ENCODE measurements at regions of chr6 and their contacts with region 1.

Region 1: DNA sequence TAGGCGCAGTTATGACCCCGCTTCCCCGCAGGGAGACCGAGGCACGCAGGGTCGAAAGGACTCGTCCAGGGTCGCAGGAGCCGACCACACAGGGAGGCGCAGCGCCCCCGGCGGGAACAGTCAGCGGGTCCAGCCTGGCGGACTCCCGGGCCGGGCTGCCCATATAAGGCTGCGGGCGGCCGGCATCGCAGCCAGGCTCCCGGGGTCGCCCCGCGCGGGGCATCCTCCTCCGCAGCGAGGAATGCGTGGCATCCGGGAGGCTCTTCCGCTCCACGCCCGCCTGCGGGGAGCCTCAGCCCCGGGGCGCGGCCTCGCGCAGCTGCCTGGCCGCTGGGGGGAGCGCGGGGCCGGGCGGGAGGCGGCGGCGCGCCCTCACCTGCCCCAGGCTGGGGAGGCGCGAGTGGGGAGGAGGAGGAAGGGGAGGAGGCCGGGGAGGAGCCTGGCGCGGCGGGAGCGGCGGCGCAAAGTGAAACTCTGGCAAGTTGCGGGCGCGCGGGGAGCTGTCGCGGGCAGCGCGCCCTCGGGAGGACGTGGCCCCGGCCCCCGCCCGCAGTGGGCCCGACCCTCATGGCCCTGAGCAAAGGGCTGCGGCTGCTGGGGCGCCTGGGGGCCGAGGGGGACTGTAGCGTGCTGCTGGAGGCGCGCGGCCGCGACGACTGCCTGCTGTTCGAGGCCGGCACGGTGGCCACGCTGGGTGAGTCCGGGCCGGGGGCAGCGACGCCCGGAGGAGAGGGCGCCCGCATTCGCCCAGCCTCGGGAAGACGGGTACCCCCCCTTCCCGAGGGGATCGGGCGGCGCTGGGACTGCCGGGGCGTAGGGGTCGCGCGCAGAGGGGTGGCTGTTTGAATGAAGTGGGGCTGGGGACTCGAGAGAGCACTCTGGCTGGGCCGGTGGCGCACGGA is at the start of gene SYNJ2:
- DNase-seq: peak; percentile 35 to 60 (median 44)
- H3K4me3 ChIP-seq: peak within 1 kb of the TSS; percentile 45 to 82 (median 66)
- H3K4me3 Mint-ChIP-seq: peak within 1 kb of the TSS; percentile 85 to 91
- H3K27ac ChIP-seq: no peak within 1 kb of the TSS
- H3K27ac Mint-ChIP-seq: peak within 1 kb of the TSS in 3 of 7 donors; percentile 43 to 80 (median 73)
- H3K4me1 ChIP-seq: peaks cover 41% of the 10 kb centered on the region in 2 donors
- H3K4me1 Mint-ChIP-seq: peaks cover 50% of the 10 kb centered on the region
- H3K27me3 ChIP-seq: peaks cover 13 to 28% of the 10 kb centered on the region in 2 donors
- H3K27me3 Mint-ChIP-seq: peaks cover 33 to 64% (median 39%) of the 10 kb centered on the region in 3 donors
- CTCF ChIP-seq: peak; percentile 46
- polyA plus RNA-seq, gene SYNJ2: 0.82 to 2.0 (median 1.6) TPM

Region 2: DNA sequence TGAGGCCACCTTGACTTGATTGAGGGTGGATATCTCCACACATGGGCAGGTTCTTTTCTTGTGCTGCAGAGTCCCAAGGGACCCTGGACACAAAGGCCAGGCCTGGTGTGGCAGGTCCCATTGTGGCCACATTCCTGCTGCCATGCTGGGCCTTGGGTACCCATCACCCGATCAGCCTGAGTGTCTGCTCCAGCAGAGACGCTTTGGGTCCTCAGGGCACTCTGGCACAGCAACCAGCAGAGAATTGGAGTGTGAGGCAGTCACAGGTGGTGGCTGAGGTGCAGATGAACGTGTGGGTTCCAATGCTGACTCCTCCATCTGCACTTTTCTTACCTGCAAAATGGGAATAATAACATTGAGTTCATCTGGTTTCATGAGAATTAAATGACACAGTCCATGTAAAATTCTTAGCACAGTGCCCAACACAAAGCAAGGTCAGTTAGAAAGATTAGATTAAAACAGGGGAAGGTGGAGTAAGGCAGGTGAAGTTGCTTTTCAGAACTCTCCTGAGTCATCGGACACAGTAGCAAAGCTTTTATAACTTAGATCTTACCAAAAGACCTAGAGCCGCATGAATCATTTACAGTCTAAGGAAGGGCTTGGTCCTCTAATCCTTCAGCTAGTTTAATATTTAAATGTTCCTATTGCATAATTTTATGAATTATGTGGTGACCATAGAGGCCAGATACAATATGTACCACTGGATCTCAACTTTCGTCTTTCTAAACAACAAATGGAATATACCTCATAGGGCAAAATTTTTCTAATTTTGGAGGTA is 360.9 kb before region 1 on chr6:
- intact Hi-C with region 1: no loop called
- DNase-seq: no peak
- H3K4me3 ChIP-seq: no peak overlapping the region
- H3K4me3 Mint-ChIP-seq: no peak overlapping the region
- H3K27ac ChIP-seq: no peak overlapping the region
- H3K27ac Mint-ChIP-seq: peak overlapping the region in 1 of 7 donors; percentile 31
- H3K4me1 ChIP-seq: no peaks in the 10 kb centered on the region
- H3K4me1 Mint-ChIP-seq: no peaks in the 10 kb centered on the region
- H3K27me3 ChIP-seq: no peaks in the 10 kb centered on the region
- H3K27me3 Mint-ChIP-seq: peaks cover 0 to 3% (median 0%) of the 10 kb centered on the region in 3 donors
- CTCF ChIP-seq: no peak

Region 3: GRCh38 chr6:158031381-158032353 is 50.0 kb after region 1 on chr6:
- intact Hi-C with region 1: loop called in 1 of 2 experiments (anchors 5 kb)
- DNase-seq: peak; percentile 97 to 98 (median 97)
- H3K4me3 ChIP-seq: peak overlapping the region in 2 of 3 experiments; percentile 2 to 51
- H3K4me3 Mint-ChIP-seq: peak overlapping the region; percentile 68 to 82
- H3K27ac ChIP-seq: peak overlapping the region; percentile 59 to 92
- H3K27ac Mint-ChIP-seq: peak overlapping the region; percentile 87 to 98 (median 96)
- H3K4me1 ChIP-seq: peaks cover 55 to 72% of the 10 kb centered on the region in 2 donors
- H3K4me1 Mint-ChIP-seq: peaks cover 46% of the 10 kb centered on the region
- H3K27me3 ChIP-seq: no peaks in the 10 kb centered on the region
- H3K27me3 Mint-ChIP-seq: peaks cover 0 to 8% (median 6%) of the 10 kb centered on the region in 3 donors
- CTCF ChIP-seq: no peak